PC-9 (cell line): ENCODE measurements at regions of chr17 and their contacts with region 1.

Region 1: GRCh38 chr17:2303204-2304188 is at the starts of genes SMG6 and SRR:
- DNase-seq: peak; percentile 63 to 91
- H3K4me3 ChIP-seq: peak within 1 kb of the TSS; percentile 94
- H3K27ac ChIP-seq: peak within 1 kb of the TSS; percentile 53
- H3K4me1 ChIP-seq: peaks cover 17% of the 10 kb centered on the region
- H3K27me3 ChIP-seq: no peaks in the 10 kb centered on the region
- CTCF ChIP-seq: no peak
- total RNA-seq, gene SMG6: 43.1 and 49.4 TPM in 2 replicates
- total RNA-seq, gene SRR: 41.8 and 52.3 TPM in 2 replicates

Region 2: DNA sequence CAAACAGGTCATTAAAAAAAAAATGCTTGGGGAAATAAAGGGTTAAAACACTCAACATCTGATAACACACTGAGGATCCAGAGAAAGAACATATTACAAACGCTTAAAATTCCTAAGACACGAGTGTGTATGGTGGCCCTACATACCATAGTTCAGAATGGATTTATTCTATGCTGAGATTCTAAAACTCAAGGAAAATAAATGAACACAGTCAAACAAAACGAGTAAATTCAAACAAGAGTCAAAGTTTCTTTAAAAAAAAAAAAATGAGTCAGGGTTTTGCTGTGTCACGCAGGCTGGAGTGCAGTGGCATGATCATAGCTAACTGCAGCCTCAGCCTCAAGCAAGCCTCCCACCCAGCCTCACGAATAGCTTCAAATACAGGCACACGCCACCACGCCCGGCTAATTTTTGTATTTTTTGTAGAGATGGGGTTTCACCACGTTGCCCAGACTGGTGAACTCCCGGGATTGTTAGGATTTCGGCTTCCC is 864.9 kb before region 1 on chr17:
- CTCF ChIA-PET with region 1: no interaction called
- POLR2A ChIA-PET with region 1: interaction called, 24 read pairs
- intact Hi-C with region 1: no loop called
- DNase-seq: peak in 1 of 2 experiments; percentile 28
- H3K4me3 ChIP-seq: no peak overlapping the region
- H3K27ac ChIP-seq: peak overlapping the region; percentile 21
- H3K4me1 ChIP-seq: no peaks in the 10 kb centered on the region
- H3K27me3 ChIP-seq: no peaks in the 10 kb centered on the region
- CTCF ChIP-seq: no peak

Region 3: GRCh38 chr17:2347547-2348307 is 44.2 kb after region 1 on chr17:
- CTCF ChIA-PET with region 1: interaction called, 4 read pairs
- POLR2A ChIA-PET with region 1: interaction called, 4 read pairs
- intact Hi-C with region 1: loop called (anchors 2 kb)
- DNase-seq: peak; percentile 93 to 95
- H3K4me3 ChIP-seq: no peak overlapping the region; the same call in 1 of the 2 replicates
- H3K27ac ChIP-seq: peak overlapping the region; percentile 77
- H3K4me1 ChIP-seq: peaks cover 34% of the 10 kb centered on the region
- H3K27me3 ChIP-seq: no peaks in the 10 kb centered on the region
- CTCF ChIP-seq: no peak

Region 4: GRCh38 chr17:2357931-2358434 is 54.5 kb after region 1 on chr17:
- CTCF ChIA-PET with region 1: interaction called, 4 read pairs
- POLR2A ChIA-PET with region 1: no interaction called
- intact Hi-C with region 1: loop called (anchors 2 kb)
- DNase-seq: no peak
- H3K4me3 ChIP-seq: no peak overlapping the region
- H3K27ac ChIP-seq: peak overlapping the region; percentile 89
- H3K4me1 ChIP-seq: peaks cover 50% of the 10 kb centered on the region
- H3K27me3 ChIP-seq: no peaks in the 10 kb centered on the region
- CTCF ChIP-seq: no peak

Region 5: GRCh38 chr17:2363851-2364762 is 60.6 kb after region 1 on chr17:
- CTCF ChIA-PET with region 1: no interaction called
- POLR2A ChIA-PET with region 1: interaction called, 10 read pairs
- intact Hi-C with region 1: loop called (anchors 2 kb)
- DNase-seq: no peak
- H3K4me3 ChIP-seq: no peak overlapping the region
- H3K27ac ChIP-seq: no peak overlapping the region
- H3K4me1 ChIP-seq: peaks cover 26% of the 10 kb centered on the region
- H3K27me3 ChIP-seq: no peaks in the 10 kb centered on the region
- CTCF ChIP-seq: no peak